GM12878 (cell line): ENCODE measurements at regions of chr9 and their contacts with region 1.

Region 1: DNA sequence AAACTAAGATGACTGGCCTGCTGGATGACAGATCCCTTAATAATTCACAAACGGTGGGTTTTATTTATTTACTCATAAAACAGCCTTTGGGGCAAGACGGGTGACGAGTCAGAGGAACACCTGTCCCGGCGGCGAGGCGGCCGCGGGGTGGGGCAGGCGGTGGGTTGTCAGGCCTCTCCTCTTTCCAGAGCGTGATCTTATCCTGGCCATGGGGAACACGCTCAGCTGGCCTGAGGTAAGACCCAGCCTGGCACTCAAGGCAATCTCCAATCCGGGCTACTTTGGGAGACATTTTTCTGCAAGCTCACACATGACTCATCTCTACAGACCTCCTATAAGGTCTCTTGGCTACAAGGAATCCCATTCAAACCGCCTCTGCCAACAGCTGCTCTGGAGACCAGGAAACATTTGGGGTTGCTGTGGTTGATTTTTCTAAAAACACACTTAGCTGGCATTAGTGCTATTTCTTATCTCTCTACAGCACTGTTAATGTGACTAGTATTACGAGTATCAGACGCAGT is 6.3 kb downstream of the RAPGEF1 start:
- DNase-seq: no peak
- ATAC-seq: peak; percentile 2
- H3K4me3 ChIP-seq: peak overlapping the region; percentile 70
- H3K27ac ChIP-seq: peak overlapping the region; percentile 99
- H3K4me1 ChIP-seq: peaks cover 75% of the 10 kb centered on the region
- H3K27me3 ChIP-seq: no peaks in the 10 kb centered on the region
- CTCF ChIP-seq: no peak
- EP300 ChIP-seq: no peak
- POLR2A ChIP-seq: peak; percentile 42
- RAD21 ChIP-seq: no peak

Region 2: GRCh38 chr9:131621551-131622358 is 111.8 kb before region 1 on chr9:
- CTCF ChIA-PET with region 1: interaction called, 19 read pairs
- POLR2A ChIA-PET with region 1: interaction called, 30 read pairs
- RAD21 ChIA-PET with region 1: interaction called, 52 read pairs
- SMC1A ChIA-PET with region 1: interaction called, 58 read pairs
- in situ Hi-C with region 1: no loop called
- intact Hi-C with region 1: loop called (anchors 5 kb)
- DNase-seq: peak; percentile 73
- ATAC-seq: peak; percentile 76
- H3K4me3 ChIP-seq: peak overlapping the region; percentile 16; the same call in 1 of the 2 replicates
- H3K27ac ChIP-seq: peak overlapping the region; percentile 89
- H3K4me1 ChIP-seq: peaks cover 32% of the 10 kb centered on the region
- H3K27me3 ChIP-seq: no peaks in the 10 kb centered on the region
- CTCF ChIP-seq: peak in 2 of 3 experiments; percentile 7 to 12; a peak in 1 of 6 replicates
- EP300 ChIP-seq: peak; percentile 7 to 44; a peak in 1 of 4 replicates
- POLR2A ChIP-seq: peak; percentile 71
- RAD21 ChIP-seq: no peak

Region 3: DNA sequence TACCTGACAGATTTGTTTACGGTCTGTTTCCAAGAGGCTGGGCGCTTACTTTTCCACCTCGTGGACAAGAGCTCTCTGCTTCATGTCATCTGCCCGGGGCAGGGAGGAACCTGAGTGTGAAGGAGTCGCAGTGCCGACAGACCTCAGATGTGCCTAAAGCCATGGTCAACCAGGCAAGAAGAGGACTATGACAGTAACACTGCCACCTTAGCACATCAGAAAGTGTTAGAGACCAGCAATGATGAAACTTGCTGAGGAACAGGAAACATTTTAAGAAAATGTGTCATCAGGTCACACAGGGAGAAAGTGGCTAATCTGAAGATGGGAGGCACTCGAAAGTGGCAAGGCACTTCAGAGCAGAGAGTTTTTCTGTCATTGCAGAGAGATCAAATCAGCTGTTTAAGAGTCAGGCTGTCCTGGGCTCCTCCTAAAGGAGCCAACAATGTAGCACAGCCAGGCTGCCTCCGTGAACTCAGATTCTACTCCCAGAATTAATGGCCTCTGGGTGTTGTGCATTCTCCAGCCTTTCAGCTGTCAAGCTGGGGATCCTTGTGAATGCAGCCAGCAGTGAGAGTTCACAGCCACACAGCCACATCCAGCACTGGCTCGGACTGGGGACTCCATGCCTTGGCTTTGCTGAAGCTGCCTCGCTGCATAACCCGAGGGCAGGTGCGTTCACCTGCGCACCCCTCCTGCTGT is 88.4 kb before region 1 on chr9:
- CTCF ChIA-PET with region 1: interaction called, 8 read pairs
- POLR2A ChIA-PET with region 1: interaction called, 4 read pairs
- RAD21 ChIA-PET with region 1: interaction called, 11 read pairs
- SMC1A ChIA-PET with region 1: interaction called, 14 read pairs
- in situ Hi-C with region 1: no loop called
- intact Hi-C with region 1: no loop called
- DNase-seq: no peak
- ATAC-seq: peak; percentile 68
- H3K4me3 ChIP-seq: no peak overlapping the region
- H3K27ac ChIP-seq: peak overlapping the region; percentile 20
- H3K4me1 ChIP-seq: peaks cover 28% of the 10 kb centered on the region
- H3K27me3 ChIP-seq: no peaks in the 10 kb centered on the region
- CTCF ChIP-seq: no peak
- EP300 ChIP-seq: no peak
- POLR2A ChIP-seq: no peak
- RAD21 ChIP-seq: no peak

Region 4: DNA sequence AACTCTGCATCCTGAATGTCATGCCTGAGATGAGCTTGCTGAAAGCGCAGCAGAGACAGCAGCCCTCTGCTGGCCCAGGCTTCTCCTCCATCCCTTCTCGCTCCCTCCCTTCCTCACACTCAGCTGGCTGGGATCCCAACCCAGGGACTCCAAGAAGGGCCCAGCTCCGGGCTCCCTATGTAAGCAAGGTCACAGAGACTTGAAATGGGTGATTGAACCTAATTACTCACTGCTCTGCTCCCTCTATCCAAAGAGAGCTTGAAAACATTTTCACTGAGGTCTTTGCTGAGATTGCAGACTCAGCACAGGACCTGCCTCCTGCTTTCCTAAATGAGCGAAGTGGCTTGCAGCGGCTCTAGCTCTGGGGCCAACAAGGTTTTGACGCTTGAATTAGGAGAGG is 36.5 kb before region 1 on chr9:
- CTCF ChIA-PET with region 1: interaction called, 3 read pairs
- POLR2A ChIA-PET with region 1: interaction called, 291 read pairs
- RAD21 ChIA-PET with region 1: interaction called, 4 read pairs
- SMC1A ChIA-PET with region 1: interaction called, 416 read pairs
- in situ Hi-C with region 1: no loop called
- intact Hi-C with region 1: loop called (anchors 5 kb)
- DNase-seq: no peak
- ATAC-seq: no peak
- H3K4me3 ChIP-seq: no peak overlapping the region
- H3K27ac ChIP-seq: no peak overlapping the region
- H3K4me1 ChIP-seq: peaks cover 30% of the 10 kb centered on the region
- H3K27me3 ChIP-seq: no peaks in the 10 kb centered on the region
- CTCF ChIP-seq: no peak
- EP300 ChIP-seq: no peak
- POLR2A ChIP-seq: no peak
- RAD21 ChIP-seq: no peak

Region 5: GRCh38 chr9:131709771-131710454 is 23.7 kb before region 1 on chr9:
- CTCF ChIA-PET with region 1: interaction called, 53 read pairs
- POLR2A ChIA-PET with region 1: interaction called, 291 read pairs
- RAD21 ChIA-PET with region 1: interaction called, 362 read pairs
- SMC1A ChIA-PET with region 1: interaction called, 416 read pairs
- in situ Hi-C with region 1: no loop called
- intact Hi-C with region 1: loop called (anchors 1 kb)
- DNase-seq: peak; percentile 77
- ATAC-seq: peak; percentile 76
- H3K4me3 ChIP-seq: peak overlapping the region; percentile 57
- H3K27ac ChIP-seq: peak overlapping the region; percentile 83
- H3K4me1 ChIP-seq: peaks cover 60% of the 10 kb centered on the region
- H3K27me3 ChIP-seq: no peaks in the 10 kb centered on the region
- CTCF ChIP-seq: 0 out of 6 replicates have a peak, but pooled peaks of 1 of the 3 experiments have one; percentile 8
- EP300 ChIP-seq: peak in 1 of 2 experiments; percentile 82; a peak in 3 of 4 replicates
- POLR2A ChIP-seq: no peak
- RAD21 ChIP-seq: no peak